CD4-positive, alpha-beta memory T cell (primary cell): ENCODE measurements at regions of chr19 and their contacts with region 1.

Region 1: DNA sequence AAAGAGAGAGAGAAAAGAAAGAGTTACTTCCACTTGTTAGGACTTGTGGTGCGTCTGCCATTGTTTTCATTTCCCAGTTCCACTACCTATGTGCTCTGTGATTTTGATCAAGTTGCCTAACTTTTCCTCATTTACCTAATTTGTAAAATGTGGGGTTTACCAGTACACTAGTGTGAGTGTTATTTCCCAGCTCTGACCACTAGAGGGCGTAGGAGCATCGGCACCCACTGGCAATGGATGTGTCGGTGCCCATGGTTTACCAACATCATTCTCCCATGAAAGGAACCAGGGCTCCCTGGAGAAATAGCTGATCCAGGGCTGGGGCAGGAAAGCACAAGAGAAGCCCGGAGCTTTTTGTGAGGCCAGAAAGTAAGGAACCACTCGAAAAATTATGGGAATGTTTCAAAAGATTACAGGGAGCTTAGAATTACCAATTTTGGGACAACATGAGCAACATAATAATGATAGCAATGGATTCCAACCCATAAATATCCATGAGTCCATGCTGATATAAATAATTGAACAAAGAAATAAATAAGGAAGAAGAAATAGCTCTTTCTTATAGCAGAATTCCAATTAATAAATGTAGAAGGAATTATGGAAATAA is 15.1 kb upstream of the CEACAM4 start:
- DNase-seq: peak; percentile 60 to 72 (median 69)
- H3K4me3 ChIP-seq: no peak overlapping the region
- H3K4me3 Mint-ChIP-seq: no peak overlapping the region
- H3K27ac ChIP-seq: no peak overlapping the region
- H3K27ac Mint-ChIP-seq: peak overlapping the region in 1 of 7 donors; percentile 24
- H3K4me1 ChIP-seq: peaks cover 28% of the 10 kb centered on the region
- H3K4me1 Mint-ChIP-seq: peaks cover 7 to 22% (median 13%) of the 10 kb centered on the region in 4 donors
- H3K27me3 ChIP-seq: no peaks in the 10 kb centered on the region
- H3K27me3 Mint-ChIP-seq: peaks cover 9 to 14% of the 10 kb centered on the region in 2 donors

Region 2: GRCh38 chr19:41563854-41564514 is 78.0 kb before region 1 on chr19:
- CTCF ChIA-PET with region 1: no interaction called
- POLR2A ChIA-PET with region 1: no interaction called
- intact Hi-C with region 1: no loop called
- DNase-seq: peak in 4 of 5 donors; percentile 58 to 88 (median 66)
- H3K4me3 ChIP-seq: peak overlapping the region in 1 of 2 donors; percentile 36
- H3K4me3 Mint-ChIP-seq: peak overlapping the region; percentile 31 to 85 (median 70)
- H3K27ac ChIP-seq: peak overlapping the region; percentile 28
- H3K27ac Mint-ChIP-seq: peak overlapping the region in 6 of 7 donors; percentile 82 to 94 (median 88)
- H3K4me1 ChIP-seq: peaks cover 75% of the 10 kb centered on the region
- H3K4me1 Mint-ChIP-seq: peaks cover 54 to 91% (median 70%) of the 10 kb centered on the region in 4 donors
- H3K27me3 ChIP-seq: no peaks in the 10 kb centered on the region
- H3K27me3 Mint-ChIP-seq: no peaks in the 10 kb centered on the region

Region 3: DNA sequence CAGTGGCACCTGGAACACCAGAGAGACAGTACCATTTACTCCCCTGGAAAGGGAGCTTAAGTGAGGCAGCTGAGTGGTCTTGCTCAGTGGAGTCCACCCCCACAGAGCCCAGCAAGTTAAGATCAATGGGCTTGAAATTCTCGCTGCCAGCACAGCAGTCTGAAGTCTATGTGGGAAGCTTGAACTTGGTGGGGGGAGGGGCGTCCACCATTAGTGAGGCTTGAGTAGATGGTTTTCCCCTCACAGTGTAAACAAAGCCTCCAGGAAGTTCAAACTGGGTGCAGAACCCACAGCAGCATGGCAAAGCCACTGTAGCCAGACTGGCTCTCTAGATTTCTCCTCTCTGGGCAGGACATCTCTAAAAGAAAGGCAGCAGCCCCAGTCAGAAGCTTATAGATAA is 15.2 kb after region 1 on chr19:
- CTCF ChIA-PET with region 1: interaction called, 31 read pairs
- POLR2A ChIA-PET with region 1: interaction called, 3 read pairs
- intact Hi-C with region 1: no loop called
- DNase-seq: peak; percentile 28 to 52 (median 38)
- H3K4me3 ChIP-seq: no peak overlapping the region
- H3K4me3 Mint-ChIP-seq: peak overlapping the region in 7 of 8 donors; percentile 53 to 76 (median 64)
- H3K27ac ChIP-seq: peak overlapping the region; percentile 44
- H3K27ac Mint-ChIP-seq: peak overlapping the region; percentile 8 to 93 (median 90)
- H3K4me1 ChIP-seq: peaks cover 18% of the 10 kb centered on the region
- H3K4me1 Mint-ChIP-seq: peaks cover 10 to 36% (median 22%) of the 10 kb centered on the region in 4 donors
- H3K27me3 ChIP-seq: no peaks in the 10 kb centered on the region
- H3K27me3 Mint-ChIP-seq: peaks cover 29 to 47% of the 10 kb centered on the region in 2 donors

Region 4: DNA sequence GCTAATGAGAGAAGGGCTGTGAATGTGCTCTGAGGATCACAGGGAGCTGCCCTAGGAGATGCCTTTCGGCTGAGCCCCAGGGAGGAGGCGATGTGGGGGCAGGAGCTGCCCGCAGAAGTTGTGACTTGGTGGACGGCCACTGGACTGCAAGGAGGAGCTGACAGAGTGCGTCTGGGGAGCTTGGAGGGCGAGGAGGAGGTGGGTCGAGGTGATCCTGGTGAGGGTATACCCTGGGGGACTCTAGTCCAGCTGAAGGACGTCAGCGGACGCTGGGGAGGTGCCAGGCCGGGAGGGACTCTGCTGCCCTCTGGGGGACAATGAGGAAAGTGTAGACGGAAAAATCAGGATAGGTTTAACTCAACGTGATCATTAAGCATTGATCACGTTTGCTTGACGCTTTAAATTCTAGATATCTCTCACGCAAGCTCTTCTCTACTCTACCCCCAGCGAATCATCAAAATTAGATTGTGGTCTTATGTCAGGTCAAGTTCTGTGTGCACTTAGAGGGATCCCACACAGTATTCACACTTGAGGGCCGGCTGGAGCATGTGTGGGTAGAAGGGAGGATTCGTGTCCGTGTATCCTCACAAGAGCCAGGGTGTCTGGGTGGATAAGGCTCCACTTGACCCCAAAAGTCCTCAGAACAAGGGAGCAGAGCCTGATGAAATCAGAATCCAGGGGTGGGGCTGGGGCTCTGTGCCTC is 49.4 kb after region 1 on chr19:
- CTCF ChIA-PET with region 1: interaction called, 72 read pairs
- POLR2A ChIA-PET with region 1: no interaction called
- intact Hi-C with region 1: loop called (anchors 5 kb)
- DNase-seq: peak in 4 of 5 donors; percentile 18 to 22 (median 19)
- H3K4me3 ChIP-seq: no peak overlapping the region
- H3K4me3 Mint-ChIP-seq: peak overlapping the region in 1 of 8 donors; percentile 15
- H3K27ac ChIP-seq: no peak overlapping the region
- H3K27ac Mint-ChIP-seq: peak overlapping the region in 1 of 7 donors; percentile 75
- H3K4me1 ChIP-seq: no peaks in the 10 kb centered on the region
- H3K4me1 Mint-ChIP-seq: peaks cover 0 to 8% (median 5%) of the 10 kb centered on the region in 4 donors
- H3K27me3 ChIP-seq: no peaks in the 10 kb centered on the region
- H3K27me3 Mint-ChIP-seq: peaks cover 26 to 30% of the 10 kb centered on the region in 2 donors

Region 5: GRCh38 chr19:41706741-41707501 is 64.9 kb after region 1 on chr19:
- CTCF ChIA-PET with region 1: interaction called, 11 read pairs
- POLR2A ChIA-PET with region 1: no interaction called
- intact Hi-C with region 1: no loop called
- DNase-seq: peak; percentile 68 to 80 (median 74)
- H3K4me3 ChIP-seq: peak overlapping the region; percentile 29 to 45
- H3K4me3 Mint-ChIP-seq: peak overlapping the region; percentile 63 to 85 (median 78)
- H3K27ac ChIP-seq: no peak overlapping the region
- H3K27ac Mint-ChIP-seq: no peak overlapping the region
- H3K4me1 ChIP-seq: no peaks in the 10 kb centered on the region
- H3K4me1 Mint-ChIP-seq: peaks cover 3 to 6% (median 6%) of the 10 kb centered on the region in 4 donors
- H3K27me3 ChIP-seq: peaks cover 5% of the 10 kb centered on the region
- H3K27me3 Mint-ChIP-seq: peaks cover 17 to 31% of the 10 kb centered on the region in 2 donors

Region 6: GRCh38 chr19:41746593-41747227 is 104.7 kb after region 1 on chr19:
- CTCF ChIA-PET with region 1: interaction called, 7 read pairs
- POLR2A ChIA-PET with region 1: no interaction called
- intact Hi-C with region 1: loop called (anchors 5 kb)
- DNase-seq: peak; percentile 37 to 50 (median 46)
- H3K4me3 ChIP-seq: no peak overlapping the region
- H3K4me3 Mint-ChIP-seq: no peak overlapping the region
- H3K27ac ChIP-seq: no peak overlapping the region
- H3K27ac Mint-ChIP-seq: no peak overlapping the region
- H3K4me1 ChIP-seq: no peaks in the 10 kb centered on the region
- H3K4me1 Mint-ChIP-seq: peaks cover 0 to 3% (median 1%) of the 10 kb centered on the region in 4 donors
- H3K27me3 ChIP-seq: no peaks in the 10 kb centered on the region
- H3K27me3 Mint-ChIP-seq: peaks cover 36 to 37% of the 10 kb centered on the region in 2 donors